Mammary epithelial cell (primary cell): ENCODE measurements at regions of chr9 and their contacts with region 1.

Region 1: GRCh38 chr9:7186175-7186574 is 428.4 kb downstream of the KDM4C start:
- DNase-seq: peak; percentile 21
- H3K4me3 ChIP-seq: no peak overlapping the region
- H3K27ac ChIP-seq: no peak overlapping the region
- H3K4me1 ChIP-seq: peaks cover 13% of the 10 kb centered on the region
- H3K27me3 ChIP-seq: no peaks in the 10 kb centered on the region
- CTCF ChIP-seq: peak; percentile 59 to 70

Region 2: DNA sequence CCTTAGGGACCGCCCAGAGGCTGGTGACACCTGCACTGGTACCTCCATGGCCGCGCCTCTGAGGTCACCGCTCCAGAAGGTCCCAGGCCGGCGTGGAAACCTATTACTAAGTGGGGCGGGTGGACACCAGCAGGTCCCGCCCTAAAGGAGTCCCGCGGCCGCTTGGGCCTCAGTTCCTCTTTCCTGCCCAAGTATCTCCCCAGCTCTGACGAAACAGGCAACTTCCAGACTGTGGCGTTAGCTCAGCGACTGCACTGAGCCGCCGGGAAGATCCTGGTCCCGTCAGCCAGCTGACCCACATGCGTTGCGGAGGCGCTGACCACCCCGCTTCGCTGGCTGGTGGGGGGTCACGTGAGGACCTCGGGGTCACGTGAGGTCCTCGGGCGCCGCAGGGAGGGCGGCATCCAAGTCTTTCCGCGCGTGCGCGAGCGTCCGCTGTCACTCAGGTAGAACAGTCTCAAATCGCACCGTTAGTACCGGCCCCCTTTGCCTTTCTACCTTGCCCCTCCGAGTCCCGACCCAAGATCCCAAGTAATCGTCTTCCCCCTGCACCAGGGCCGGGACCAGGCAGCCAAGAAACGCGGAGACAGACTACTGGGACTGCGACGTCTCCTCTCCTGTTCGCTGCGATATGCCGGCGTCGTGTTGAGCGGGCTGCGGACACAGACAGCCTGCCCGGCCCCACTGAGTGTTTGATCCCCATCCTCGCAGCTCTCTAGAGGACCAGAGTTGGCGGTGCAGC is 482.1 kb before region 1 on chr9:
- CTCF ChIA-PET with region 1: no interaction called
- dilution Hi-C with region 1: no loop called
- in situ Hi-C with region 1: no loop called
- intact Hi-C with region 1: no loop called
- DNase-seq: peak; percentile 74
- H3K4me3 ChIP-seq: peak overlapping the region; percentile 15 to 55 (median 52)
- H3K27ac ChIP-seq: no peak overlapping the region
- H3K4me1 ChIP-seq: no peaks in the 10 kb centered on the region
- H3K27me3 ChIP-seq: no peaks in the 10 kb centered on the region
- CTCF ChIP-seq: no peak

Region 3: DNA sequence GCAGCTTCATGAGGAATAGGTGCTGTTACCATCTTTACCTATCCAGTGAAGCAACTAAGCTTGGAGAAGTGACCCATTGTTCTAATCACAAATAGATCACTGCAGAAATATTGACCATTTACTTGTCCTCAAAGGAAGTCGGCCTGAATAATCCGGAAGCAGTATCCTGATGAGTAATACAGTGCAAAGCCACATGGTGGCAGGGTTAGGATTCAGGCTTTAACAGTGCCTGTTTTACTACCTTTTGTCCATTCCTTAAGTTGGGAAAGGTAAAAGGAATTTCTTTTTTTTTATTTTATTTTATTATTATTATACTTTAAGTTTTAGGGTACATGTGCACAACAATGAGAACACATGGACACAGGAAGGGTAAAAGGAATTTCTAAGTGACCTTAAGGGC is 92.1 kb before region 1 on chr9:
- CTCF ChIA-PET with region 1: no interaction called
- dilution Hi-C with region 1: no loop called
- in situ Hi-C with region 1: loop called in 1 of 2 experiments (anchors 25 kb)
- intact Hi-C with region 1: loop called (anchors 2 kb)
- DNase-seq: peak; percentile 12
- H3K4me3 ChIP-seq: no peak overlapping the region
- H3K27ac ChIP-seq: no peak overlapping the region
- H3K4me1 ChIP-seq: no peaks in the 10 kb centered on the region
- H3K27me3 ChIP-seq: no peaks in the 10 kb centered on the region
- CTCF ChIP-seq: peak; percentile 43 to 52